Activated CD4-positive, alpha-beta memory T cell treated with anti-CD3 and anti-CD28 coated beads, Interleukin-2, amount 10 ng/mL, durations not matched to agents 7 days and 5 days (primary cell): ENCODE measurements at regions of chr18 and their contacts with region 1.

Region 1: DNA sequence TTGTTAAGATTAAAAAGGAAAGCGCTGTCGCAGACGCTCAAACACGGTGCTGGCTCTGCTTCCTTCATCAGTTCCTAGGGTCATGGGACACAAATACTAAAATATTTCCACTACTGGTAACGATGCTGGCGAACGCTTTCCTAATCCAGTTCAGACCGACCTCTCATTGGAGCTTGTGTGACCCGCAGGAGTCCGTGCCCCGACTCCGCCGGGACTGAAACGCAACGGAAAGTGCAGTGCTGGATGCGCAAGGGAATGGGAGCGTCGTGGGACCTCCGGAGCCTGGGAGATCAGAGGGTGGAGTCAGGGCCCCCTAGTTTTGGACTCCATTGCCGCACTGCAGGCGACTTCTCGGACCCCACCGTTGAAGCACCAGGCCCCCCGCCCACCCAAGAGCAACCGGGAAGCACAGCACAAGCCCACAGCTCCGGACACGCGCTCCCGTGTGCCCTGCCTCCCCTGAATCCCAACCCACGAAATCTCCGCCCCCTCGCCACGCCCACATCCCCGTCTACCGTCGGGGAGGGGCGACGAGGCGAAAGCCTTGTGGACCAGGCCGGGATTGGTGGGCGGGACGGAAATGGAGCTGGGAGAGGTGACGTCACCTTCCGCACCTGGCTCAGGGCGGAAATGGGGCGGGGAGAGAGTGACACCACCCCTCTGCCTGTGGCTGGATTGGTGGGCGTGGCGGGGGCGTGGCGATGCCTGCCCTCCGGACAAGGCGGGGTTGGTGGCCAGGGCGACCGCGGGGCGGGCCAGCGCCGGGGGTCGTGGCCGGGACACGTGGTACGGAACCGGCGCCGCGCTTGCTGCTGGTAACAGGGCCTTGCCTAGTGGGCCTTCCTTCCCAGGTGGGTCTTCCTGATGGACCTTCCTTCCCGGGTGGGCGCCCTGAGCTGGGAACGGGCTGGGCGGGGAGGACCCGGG is at the start of gene CNDP2:
- DNase-seq: peak; percentile 99
- H3K4me3 Mint-ChIP-seq: peak within 1 kb of the TSS; percentile 88
- H3K27ac Mint-ChIP-seq: peak within 1 kb of the TSS; percentile 99
- H3K4me1 Mint-ChIP-seq: peaks cover 43% of the 10 kb centered on the region
- H3K27me3 Mint-ChIP-seq: peaks cover 11% of the 10 kb centered on the region
- total RNA-seq, gene CNDP2: 141 to 143 TPM

Region 2: DNA sequence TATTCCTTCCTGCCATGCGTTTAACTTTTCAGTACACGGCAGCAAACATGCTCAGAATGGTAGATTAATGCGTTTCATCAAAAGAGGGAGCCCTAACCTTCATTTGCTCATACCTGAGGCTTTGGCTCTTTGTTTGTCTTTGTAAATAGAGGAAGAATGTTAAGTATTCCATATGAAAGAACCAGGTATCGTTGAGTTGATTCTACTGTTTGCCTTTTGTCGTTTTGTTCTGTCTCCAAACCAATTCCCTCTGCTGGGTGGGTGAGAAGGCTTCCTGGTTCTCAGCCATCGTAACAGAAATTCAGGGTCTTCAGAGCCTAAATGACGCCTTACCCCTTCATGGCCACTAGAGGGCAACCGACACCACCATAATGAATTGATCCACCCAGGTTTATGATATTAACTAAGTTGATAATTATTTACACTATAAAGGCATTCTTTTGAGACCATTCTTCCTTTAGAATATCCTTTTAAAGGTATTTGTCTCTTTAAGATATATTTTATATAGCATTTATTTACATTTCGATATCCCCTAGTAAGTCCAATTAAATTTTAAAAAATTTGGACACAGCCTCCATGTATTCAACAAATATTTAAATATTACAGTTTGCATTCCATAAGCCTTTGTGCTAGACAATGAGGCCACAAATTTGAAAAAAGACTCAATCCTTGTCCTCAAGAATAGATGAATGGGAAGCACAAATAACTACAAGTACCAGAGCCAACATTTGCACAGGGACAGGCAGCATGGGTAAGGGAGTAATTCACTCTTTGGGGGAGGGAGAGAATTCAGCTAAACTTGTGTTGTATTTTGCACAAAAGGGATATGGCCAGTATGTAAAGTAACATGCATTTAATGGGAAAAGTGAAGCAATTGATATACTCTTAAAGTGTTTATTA is 299.4 kb before region 1 on chr18:
- CTCF ChIA-PET with region 1: interaction called, 18 read pairs
- POLR2A ChIA-PET with region 1: interaction called, 3 read pairs
- DNase-seq: peak; percentile 52
- H3K4me3 Mint-ChIP-seq: peak overlapping the region; percentile 31
- H3K27ac Mint-ChIP-seq: no peak overlapping the region
- H3K4me1 Mint-ChIP-seq: peaks cover 2% of the 10 kb centered on the region
- H3K27me3 Mint-ChIP-seq: peaks cover 7% of the 10 kb centered on the region

Region 3: GRCh38 chr18:74353169-74353775 is 142.6 kb before region 1 on chr18:
- CTCF ChIA-PET with region 1: interaction called, 62 read pairs
- POLR2A ChIA-PET with region 1: interaction called, 5 read pairs
- DNase-seq: peak; percentile 55
- H3K4me3 Mint-ChIP-seq: no peak overlapping the region
- H3K27ac Mint-ChIP-seq: no peak overlapping the region
- H3K4me1 Mint-ChIP-seq: peaks cover 19% of the 10 kb centered on the region
- H3K27me3 Mint-ChIP-seq: peaks cover 11% of the 10 kb centered on the region

Region 4: DNA sequence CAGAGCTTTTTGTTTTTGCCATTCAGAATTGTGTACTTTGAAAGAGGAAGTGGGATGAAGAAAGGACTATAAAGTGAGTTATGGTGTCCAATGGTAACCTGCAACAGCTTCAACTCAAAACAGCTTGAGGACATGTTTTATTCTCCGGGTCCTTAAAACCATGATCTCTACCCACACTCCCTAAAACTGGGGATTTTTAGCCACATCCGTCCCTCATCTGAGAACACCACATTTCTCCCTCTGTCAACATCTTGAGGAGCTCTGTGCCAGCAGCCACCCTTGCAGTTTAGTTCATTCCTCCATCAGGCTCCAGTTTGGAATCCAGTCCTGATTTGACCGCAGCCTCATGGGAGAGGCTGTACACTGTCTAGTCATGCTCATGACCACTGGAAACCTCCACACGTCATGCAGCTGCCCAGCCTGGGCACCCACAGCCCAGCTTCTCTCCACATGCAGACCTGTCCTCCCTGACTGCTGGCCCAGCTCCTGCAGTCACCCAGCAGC is 117.6 kb before region 1 on chr18:
- CTCF ChIA-PET with region 1: interaction called, 8 read pairs
- POLR2A ChIA-PET with region 1: interaction called, 22 read pairs
- DNase-seq: peak; percentile 26
- H3K4me3 Mint-ChIP-seq: no peak overlapping the region
- H3K27ac Mint-ChIP-seq: peak overlapping the region; percentile 48
- H3K4me1 Mint-ChIP-seq: peaks cover 26% of the 10 kb centered on the region
- H3K27me3 Mint-ChIP-seq: peaks cover 5% of the 10 kb centered on the region

Region 5: DNA sequence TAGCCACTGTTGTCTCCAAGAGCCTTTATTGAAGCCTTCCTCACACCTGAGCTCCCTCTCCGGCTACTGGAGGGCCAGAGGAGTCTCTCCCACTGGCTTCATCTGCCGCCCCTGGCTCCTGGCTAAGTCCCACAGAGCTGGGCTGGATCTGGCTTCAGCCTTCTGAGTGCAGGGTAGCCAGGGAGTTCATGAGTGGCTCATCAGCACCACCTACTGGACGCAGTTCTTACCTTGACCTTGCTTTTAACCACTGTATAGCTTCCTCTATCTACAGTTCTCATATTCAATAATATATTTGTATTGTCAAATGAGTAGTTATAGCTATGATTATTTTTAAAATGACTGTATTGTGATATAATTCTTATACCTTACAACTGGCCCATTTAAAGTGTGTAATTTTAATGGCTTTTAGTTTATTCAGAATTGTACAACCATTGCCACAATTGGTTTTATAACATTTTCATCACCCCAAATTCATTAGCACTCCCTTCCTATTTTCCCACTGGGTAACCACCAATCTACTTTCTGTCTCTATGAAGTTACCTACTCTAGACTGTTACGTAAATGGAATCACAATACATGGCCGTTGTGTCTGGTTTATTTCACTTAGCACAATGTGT is 56.2 kb after region 1 on chr18:
- CTCF ChIA-PET with region 1: interaction called, 16 read pairs
- POLR2A ChIA-PET with region 1: interaction called, 3 read pairs
- DNase-seq: peak; percentile 81
- H3K4me3 Mint-ChIP-seq: no peak overlapping the region
- H3K27ac Mint-ChIP-seq: no peak overlapping the region
- H3K4me1 Mint-ChIP-seq: no peaks in the 10 kb centered on the region
- H3K27me3 Mint-ChIP-seq: peaks cover 16% of the 10 kb centered on the region

Region 6: GRCh38 chr18:74623047-74623816 is 127.4 kb after region 1 on chr18:
- CTCF ChIA-PET with region 1: no interaction called
- POLR2A ChIA-PET with region 1: no interaction called
- DNase-seq: no peak
- H3K4me3 Mint-ChIP-seq: no peak overlapping the region
- H3K27ac Mint-ChIP-seq: no peak overlapping the region
- H3K4me1 Mint-ChIP-seq: peaks cover 5% of the 10 kb centered on the region
- H3K27me3 Mint-ChIP-seq: no peaks in the 10 kb centered on the region